SK-N-SH (cell line): ENCODE measurements at regions of chr12 and their contacts with region 1.

Region 1: GRCh38 chr12:91355150-91356006 is 172.8 kb upstream of the DCN start:
- DNase-seq: peak; percentile 45
- H3K4me3 ChIP-seq: no peak overlapping the region
- H3K27ac ChIP-seq: no peak overlapping the region
- H3K4me1 ChIP-seq: no peaks in the 10 kb centered on the region
- H3K27me3 ChIP-seq: no peaks in the 10 kb centered on the region
- CTCF ChIP-seq: peak; percentile 94
- EP300 ChIP-seq: no peak
- RAD21 ChIP-seq: peak; percentile 98

Region 2: DNA sequence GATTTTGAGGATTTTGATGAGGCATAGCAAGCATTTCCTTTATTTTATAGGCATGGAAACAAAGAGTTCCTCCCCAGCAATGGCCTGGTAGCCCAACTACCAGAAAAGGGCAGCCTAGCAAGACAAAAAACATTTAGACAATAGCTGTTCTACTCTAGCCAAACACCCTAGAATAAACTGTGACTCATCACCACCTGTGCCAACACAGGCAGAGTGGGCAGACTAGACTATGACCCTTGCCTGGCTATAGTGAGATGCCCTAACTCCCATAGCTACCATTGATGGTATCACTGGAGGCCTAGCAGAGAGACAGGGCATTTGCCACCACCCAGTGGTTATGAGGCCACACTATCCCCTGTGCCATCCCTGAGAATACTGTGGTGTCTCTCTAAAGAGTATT is 384.9 kb before region 1 on chr12:
- CTCF ChIA-PET with region 1: interaction called, 16 read pairs
- POLR2A ChIA-PET with region 1: no interaction called
- DNase-seq: no peak
- H3K4me3 ChIP-seq: no peak overlapping the region
- H3K27ac ChIP-seq: no peak overlapping the region
- H3K4me1 ChIP-seq: peaks cover 0 to 13% of the 10 kb centered on the region in 2 experiments; a peak in 3 of 4 replicates
- H3K27me3 ChIP-seq: no peaks in the 10 kb centered on the region
- CTCF ChIP-seq: no peak
- EP300 ChIP-seq: no peak
- RAD21 ChIP-seq: no peak

Region 3: GRCh38 chr12:90987520-90987919 is 367.9 kb before region 1 on chr12:
- CTCF ChIA-PET with region 1: interaction called, 11 read pairs
- POLR2A ChIA-PET with region 1: no interaction called
- DNase-seq: no peak
- H3K4me3 ChIP-seq: no peak overlapping the region
- H3K27ac ChIP-seq: no peak overlapping the region
- H3K4me1 ChIP-seq: no peaks in the 10 kb centered on the region
- H3K27me3 ChIP-seq: no peaks in the 10 kb centered on the region
- CTCF ChIP-seq: peak; percentile 19; the same call in 1 of the 2 replicates
- EP300 ChIP-seq: no peak
- RAD21 ChIP-seq: no peak

Region 4: GRCh38 chr12:91332302-91332701 is 23.1 kb before region 1 on chr12:
- CTCF ChIA-PET with region 1: interaction called, 18 read pairs
- POLR2A ChIA-PET with region 1: no interaction called
- DNase-seq: no peak
- H3K4me3 ChIP-seq: no peak overlapping the region
- H3K27ac ChIP-seq: no peak overlapping the region
- H3K4me1 ChIP-seq: no peaks in the 10 kb centered on the region; a peak in 1 of 4 replicates
- H3K27me3 ChIP-seq: no peaks in the 10 kb centered on the region
- CTCF ChIP-seq: peak; percentile 43
- EP300 ChIP-seq: no peak
- RAD21 ChIP-seq: peak; percentile 59

Region 5: GRCh38 chr12:91367234-91367849 is 12.0 kb after region 1 on chr12:
- CTCF ChIA-PET with region 1: interaction called, 16 read pairs
- POLR2A ChIA-PET with region 1: no interaction called
- DNase-seq: no peak
- H3K4me3 ChIP-seq: no peak overlapping the region
- H3K27ac ChIP-seq: no peak overlapping the region
- H3K4me1 ChIP-seq: no peaks in the 10 kb centered on the region; a peak in 1 of 4 replicates
- H3K27me3 ChIP-seq: no peaks in the 10 kb centered on the region
- CTCF ChIP-seq: peak; percentile 70
- EP300 ChIP-seq: no peak
- RAD21 ChIP-seq: peak; percentile 59

Region 6: DNA sequence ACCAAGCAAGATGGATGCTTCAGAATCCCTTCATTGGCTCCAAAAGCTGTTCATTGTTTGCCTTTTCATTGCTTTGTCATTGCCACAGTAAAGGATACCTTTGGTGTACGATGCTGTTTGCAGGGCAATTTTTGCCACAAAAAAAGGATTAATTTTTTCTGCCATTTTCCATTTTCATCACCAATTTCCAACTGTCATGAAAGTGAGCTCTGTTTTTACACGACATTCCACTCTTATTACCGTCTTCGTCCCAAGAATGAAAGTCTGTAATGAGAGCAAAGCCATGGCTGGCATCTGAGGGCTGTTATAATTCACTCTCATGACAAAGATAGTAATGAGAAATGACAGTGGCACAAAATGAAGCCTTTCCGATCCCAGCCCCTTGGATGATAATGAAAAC is 99.9 kb after region 1 on chr12:
- CTCF ChIA-PET with region 1: no interaction called
- POLR2A ChIA-PET with region 1: no interaction called
- DNase-seq: no peak
- H3K4me3 ChIP-seq: no peak overlapping the region
- H3K27ac ChIP-seq: no peak overlapping the region
- H3K4me1 ChIP-seq: no peaks in the 10 kb centered on the region
- H3K27me3 ChIP-seq: no peaks in the 10 kb centered on the region
- CTCF ChIP-seq: no peak
- EP300 ChIP-seq: no peak
- RAD21 ChIP-seq: no peak